ENCODE measurements at regions of chr1 and their contacts with region 1.

Region 1: GRCh38 chr1:145963995-145964901 is at the starts of genes ANKRD34A and POLR3GL:
- DNase-seq: peak; percentile 90

Region 2: DNA sequence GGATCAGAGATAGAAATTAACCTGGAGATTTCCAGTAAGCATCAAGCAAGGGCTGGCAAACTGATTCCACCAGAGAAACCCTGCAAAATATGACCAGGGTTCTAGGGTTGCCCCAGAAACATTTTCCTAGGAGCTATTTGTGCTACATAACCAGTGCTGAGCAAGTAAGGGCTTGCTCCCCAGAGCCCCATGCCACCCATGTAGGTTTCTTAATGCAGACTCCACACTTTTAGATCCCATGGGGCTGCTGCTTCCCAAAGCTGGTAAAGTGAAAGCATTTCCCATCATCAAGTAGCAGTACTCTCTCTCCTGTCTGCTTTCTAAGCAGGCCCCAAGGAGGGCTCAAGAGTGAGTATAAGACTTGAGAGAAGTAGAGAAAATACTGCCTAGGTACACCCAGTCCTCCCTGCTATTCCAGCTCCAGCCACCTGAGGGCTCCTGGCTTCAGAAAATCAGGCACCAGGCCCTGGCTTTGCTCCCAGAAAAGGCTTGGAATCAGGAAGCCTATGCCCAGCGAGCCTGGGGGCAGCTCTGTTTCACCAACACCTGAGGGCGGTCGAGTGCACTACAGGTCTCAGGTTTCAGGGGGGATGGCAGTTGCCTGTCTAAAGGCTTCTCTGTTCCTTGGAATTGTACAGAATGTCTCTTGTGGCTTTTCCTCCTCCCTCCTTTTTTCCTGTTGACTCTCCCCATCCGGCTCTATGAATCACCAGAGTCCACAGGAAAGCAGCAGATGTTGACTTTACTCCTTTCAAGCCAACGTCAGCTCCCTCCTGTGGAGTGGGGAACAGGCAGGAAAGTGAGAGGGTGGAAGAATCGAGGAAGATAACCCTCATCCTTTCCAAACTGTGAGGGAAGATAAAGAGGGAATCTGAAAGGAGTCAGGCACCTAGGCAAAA is 72.4 kb before region 1 on chr1:
- CTCF ChIA-PET with region 1: interaction called, 5 read pairs
- POLR2A ChIA-PET with region 1: interaction called, 10 read pairs
- DNase-seq: peak; percentile 95

Region 3: DNA sequence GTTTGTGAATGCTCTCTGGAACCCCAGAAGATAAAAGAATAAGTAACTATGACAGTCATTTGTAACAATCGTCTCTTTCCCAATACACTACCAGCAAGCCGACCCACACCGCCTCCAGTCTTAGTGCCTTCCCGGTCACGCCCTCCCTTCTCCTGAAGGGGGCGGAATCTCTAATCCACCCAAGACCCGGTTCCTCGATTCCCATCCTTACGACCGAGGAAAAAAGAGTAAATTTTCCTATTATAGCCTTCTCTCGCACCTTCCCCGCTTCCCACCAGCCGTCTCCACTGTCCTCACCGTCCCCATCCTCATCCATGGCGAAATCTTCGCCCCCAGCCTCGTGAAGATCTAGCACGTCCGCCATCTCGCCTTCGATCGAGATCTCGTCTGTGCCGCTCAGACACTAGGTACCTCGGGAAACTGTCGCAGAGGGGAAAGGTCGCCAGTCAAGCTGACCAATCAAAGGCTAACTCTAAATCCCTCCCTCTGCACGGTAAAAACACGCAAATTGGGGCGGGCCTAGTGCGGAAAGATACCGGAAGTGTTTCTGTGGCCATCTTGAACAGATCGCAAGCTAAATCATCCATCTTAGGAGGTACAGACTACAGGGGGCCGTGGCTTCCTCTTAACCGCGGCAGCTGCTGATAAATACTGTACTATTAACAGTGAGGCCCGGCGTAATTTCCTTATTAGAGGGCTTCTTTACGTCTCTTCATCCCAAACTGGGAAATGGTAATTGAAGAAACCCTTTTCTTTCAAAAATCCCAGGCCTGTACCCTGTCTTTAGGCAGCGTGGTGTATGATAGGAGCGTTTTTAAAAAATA is 37.0 kb before region 1 on chr1 and contains the start of gene RBM8A:
- CTCF ChIA-PET with region 1: interaction called, 3 read pairs
- POLR2A ChIA-PET with region 1: interaction called, 90 read pairs
- DNase-seq: peak; percentile 92

Region 4: DNA sequence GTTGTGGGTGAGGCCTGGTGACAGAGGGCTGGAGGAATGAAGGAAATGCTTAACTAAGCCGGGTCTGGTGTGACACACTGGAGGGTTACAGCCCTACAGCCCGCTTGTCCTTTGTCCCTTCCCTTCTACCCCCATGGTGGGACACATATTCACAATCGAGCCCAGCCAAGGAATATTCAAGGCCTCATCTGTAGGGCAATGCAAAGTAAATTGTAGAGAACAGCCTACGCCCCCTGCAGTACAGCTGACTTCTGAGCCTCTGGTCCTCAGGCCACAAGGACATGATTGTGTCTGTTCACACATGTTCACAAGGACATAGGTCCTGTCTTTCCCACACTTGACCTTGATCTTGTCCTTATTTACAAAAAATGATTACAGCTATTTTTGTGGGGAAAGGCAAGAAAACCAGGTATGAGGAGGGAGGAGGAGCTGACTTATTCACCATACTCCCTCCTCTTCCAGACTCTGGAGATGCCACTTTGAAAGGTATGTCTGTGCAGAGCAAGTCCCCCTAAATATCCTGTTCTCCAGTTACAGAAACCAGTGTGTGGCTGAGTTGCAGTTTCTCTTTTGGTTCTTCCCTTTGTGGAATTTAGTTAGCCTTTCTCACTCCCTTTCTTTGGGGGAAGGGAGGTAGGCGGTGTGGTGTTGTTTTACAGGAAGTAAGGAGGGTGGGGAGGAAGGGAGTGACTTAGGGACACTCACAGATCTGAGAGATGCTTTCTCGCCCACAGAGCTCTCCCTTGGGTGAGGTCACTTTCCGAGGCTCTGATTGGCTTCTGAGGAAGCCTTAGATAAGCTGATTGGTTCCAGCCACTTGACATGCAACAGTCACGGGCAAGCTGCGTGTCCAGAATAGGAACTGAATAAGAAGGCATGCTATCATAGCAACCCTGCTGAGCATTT is 14.9 kb after region 1 on chr1:
- CTCF ChIA-PET with region 1: interaction called, 26 read pairs
- POLR2A ChIA-PET with region 1: interaction called, 29 read pairs
- DNase-seq: peak; percentile 90

Region 5: GRCh38 chr1:146049436-146049835 is 85.2 kb after region 1 on chr1:
- CTCF ChIA-PET with region 1: no interaction called
- POLR2A ChIA-PET with region 1: interaction called, 16 read pairs
- DNase-seq: no peak

Measured in HEK293T (cell line).